WTC11 (cell line): ENCODE measurements at regions of chr1 and their contacts with region 1.

Region 1: GRCh38 chr1:220473440-220473839 is 54.5 kb upstream of the MARK1 start:
- DNase-seq: no peak
- ATAC-seq: no peak
- H3K4me3 Mint-ChIP-seq: no peak overlapping the region
- H3K27ac Mint-ChIP-seq: no peak overlapping the region
- H3K4me1 Mint-ChIP-seq: no peaks in the 10 kb centered on the region
- H3K27me3 Mint-ChIP-seq: no peaks in the 10 kb centered on the region
- CTCF ChIP-seq: no peak

Region 2: GRCh38 chr1:220391479-220391878 is 82.0 kb before region 1 on chr1:
- CTCF ChIA-PET with region 1: no interaction called
- POLR2A ChIA-PET with region 1: interaction called, 11 read pairs
- DNase-seq: no peak
- ATAC-seq: peak; percentile 22; the same call in 1 of the 2 replicates
- H3K4me3 Mint-ChIP-seq: no peak overlapping the region
- H3K27ac Mint-ChIP-seq: no peak overlapping the region
- H3K4me1 Mint-ChIP-seq: peaks cover 18% of the 10 kb centered on the region
- H3K27me3 Mint-ChIP-seq: no peaks in the 10 kb centered on the region
- CTCF ChIP-seq: no peak